Mammary epithelial cell (primary cell): ENCODE measurements at regions of chr7 and their contacts with region 1.

Region 1: GRCh38 chr7:992709-993607 is 10.0 kb downstream of the CYP2W1 start:
- DNase-seq: peak; percentile 86
- H3K4me3 ChIP-seq: no peak overlapping the region
- H3K27ac ChIP-seq: no peak overlapping the region
- H3K4me1 ChIP-seq: peaks cover 8% of the 10 kb centered on the region
- H3K27me3 ChIP-seq: no peaks in the 10 kb centered on the region
- CTCF ChIP-seq: peak; percentile 99 to 100

Region 2: GRCh38 chr7:901381-902154 is 91.4 kb before region 1 on chr7:
- CTCF ChIA-PET with region 1: interaction called, 15 read pairs
- dilution Hi-C with region 1: no loop called
- in situ Hi-C with region 1: no loop called
- intact Hi-C with region 1: no loop called
- DNase-seq: peak; percentile 57
- H3K4me3 ChIP-seq: no peak overlapping the region
- H3K27ac ChIP-seq: no peak overlapping the region
- H3K4me1 ChIP-seq: peaks cover 3% of the 10 kb centered on the region
- H3K27me3 ChIP-seq: no peaks in the 10 kb centered on the region
- CTCF ChIP-seq: no peak

Region 3: GRCh38 chr7:1065263-1066260 is 72.6 kb after region 1 on chr7:
- CTCF ChIA-PET with region 1: interaction called, 8 read pairs
- dilution Hi-C with region 1: no loop called
- in situ Hi-C with region 1: loop called (anchors 5 to 10 kb)
- intact Hi-C with region 1: loop called (anchors 1 kb)
- DNase-seq: peak; percentile 44
- H3K4me3 ChIP-seq: peak overlapping the region in 1 of 3 experiments; percentile 21
- H3K27ac ChIP-seq: no peak overlapping the region
- H3K4me1 ChIP-seq: peaks cover 14% of the 10 kb centered on the region
- H3K27me3 ChIP-seq: no peaks in the 10 kb centered on the region
- CTCF ChIP-seq: peak; percentile 59 to 90

Region 4: DNA sequence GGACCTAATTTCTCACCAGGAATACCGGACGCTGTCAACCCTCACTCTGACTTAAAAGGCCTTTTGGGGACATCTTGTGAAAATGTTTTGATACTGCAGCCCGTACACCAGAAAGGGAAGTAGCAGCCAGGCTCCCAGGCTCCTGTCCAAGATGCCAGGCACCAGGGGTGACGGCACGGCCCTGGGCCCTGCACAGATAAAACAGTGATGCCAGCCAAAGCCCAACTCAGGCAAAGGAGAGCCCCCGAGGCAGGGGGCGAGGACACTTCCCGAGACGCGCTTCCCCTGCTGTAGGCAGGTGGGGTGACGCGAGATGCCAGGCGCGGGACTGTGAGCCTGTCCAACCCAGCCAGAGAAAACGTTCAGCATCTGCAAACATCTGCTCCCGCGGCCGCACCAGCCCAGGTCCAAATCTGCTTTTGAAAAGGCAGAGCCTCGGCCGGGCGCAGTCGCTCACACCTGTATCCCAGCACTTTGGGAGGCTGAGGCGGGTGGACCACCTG is 151.4 kb after region 1 on chr7:
- CTCF ChIA-PET with region 1: interaction called, 3 read pairs
- dilution Hi-C with region 1: no loop called
- in situ Hi-C with region 1: loop called in 1 of 2 experiments (anchors 5 kb)
- intact Hi-C with region 1: loop called (anchors 5 kb)
- DNase-seq: peak; percentile 39
- H3K4me3 ChIP-seq: no peak overlapping the region
- H3K27ac ChIP-seq: no peak overlapping the region
- H3K4me1 ChIP-seq: no peaks in the 10 kb centered on the region
- H3K27me3 ChIP-seq: no peaks in the 10 kb centered on the region
- CTCF ChIP-seq: peak; percentile 39 to 48

Region 5: GRCh38 chr7:1169409-1170368 is 176.7 kb after region 1 on chr7:
- CTCF ChIA-PET with region 1: no interaction called
- dilution Hi-C with region 1: no loop called
- in situ Hi-C with region 1: no loop called
- intact Hi-C with region 1: loop called (anchors 1 kb)
- DNase-seq: peak; percentile 57
- H3K4me3 ChIP-seq: peak overlapping the region; percentile 24 to 65 (median 43)
- H3K27ac ChIP-seq: peak overlapping the region; percentile 21
- H3K4me1 ChIP-seq: no peaks in the 10 kb centered on the region
- H3K27me3 ChIP-seq: no peaks in the 10 kb centered on the region
- CTCF ChIP-seq: peak; percentile 77 to 83

Region 6: GRCh38 chr7:1175967-1176851 is 183.3 kb after region 1 on chr7:
- CTCF ChIA-PET with region 1: no interaction called
- dilution Hi-C with region 1: no loop called
- in situ Hi-C with region 1: no loop called
- intact Hi-C with region 1: loop called (anchors 1 kb)
- DNase-seq: peak; percentile 40
- H3K4me3 ChIP-seq: peak overlapping the region in 1 of 3 experiments; percentile 21
- H3K27ac ChIP-seq: no peak overlapping the region
- H3K4me1 ChIP-seq: peaks cover 8% of the 10 kb centered on the region
- H3K27me3 ChIP-seq: no peaks in the 10 kb centered on the region
- CTCF ChIP-seq: peak; percentile 82 to 94

Region 7: DNA sequence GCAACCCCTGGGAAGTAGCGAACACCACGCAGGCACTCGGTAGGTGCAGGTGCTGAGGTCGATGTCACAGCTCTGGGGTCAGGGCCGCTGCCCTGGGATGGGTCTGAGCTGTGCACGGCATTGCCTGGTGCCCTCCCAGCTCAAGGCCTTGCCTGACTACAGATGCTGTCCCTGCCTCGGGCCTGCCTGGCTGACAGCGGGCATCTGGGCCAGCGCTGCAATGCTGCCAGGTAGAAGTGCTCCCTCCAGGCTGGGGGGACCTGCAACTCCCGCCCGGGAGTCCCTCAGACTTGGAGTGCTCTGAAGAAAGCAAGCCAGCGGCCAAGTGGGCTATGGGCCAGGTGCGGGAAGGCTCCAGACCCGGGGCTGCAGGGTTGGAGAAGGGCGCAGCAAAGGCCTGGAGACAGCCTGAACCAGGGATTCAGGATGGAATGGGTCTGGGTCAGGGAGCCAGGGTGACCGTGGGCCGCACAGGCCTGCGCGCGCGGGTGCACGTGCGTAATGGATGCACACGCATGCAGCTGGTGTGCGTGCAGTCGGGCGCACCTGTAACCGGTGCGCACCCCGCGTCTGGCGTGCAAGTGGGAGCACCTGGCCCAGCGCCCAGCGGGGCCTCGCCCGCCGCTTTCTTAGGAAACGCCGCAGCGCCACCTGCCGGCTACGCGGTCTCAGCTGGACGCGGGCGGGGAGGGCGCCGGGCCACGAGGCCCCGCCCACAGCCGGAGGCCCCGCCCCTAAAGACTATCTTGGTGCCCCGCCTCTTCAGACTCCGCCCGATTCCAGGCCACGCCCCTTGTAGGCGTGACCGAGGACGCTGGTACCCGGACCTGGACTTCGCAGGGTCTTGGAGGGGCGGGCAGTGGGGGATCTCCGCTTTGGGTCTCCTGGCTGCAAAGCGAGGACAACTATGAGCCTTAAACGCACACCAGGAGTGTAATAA is 419.6 kb after region 1 on chr7:
- CTCF ChIA-PET with region 1: no interaction called
- dilution Hi-C with region 1: no loop called
- in situ Hi-C with region 1: no loop called
- intact Hi-C with region 1: loop called (anchors 5 kb)
- DNase-seq: peak; percentile 63
- H3K4me3 ChIP-seq: no peak overlapping the region
- H3K27ac ChIP-seq: no peak overlapping the region
- H3K4me1 ChIP-seq: no peaks in the 10 kb centered on the region
- H3K27me3 ChIP-seq: peaks cover 2% of the 10 kb centered on the region
- CTCF ChIP-seq: peak; percentile 47 to 75